Aorta (tissue), 5 donors: ENCODE measurements at regions of chr19 and their contacts with region 1.

Region 1: DNA sequence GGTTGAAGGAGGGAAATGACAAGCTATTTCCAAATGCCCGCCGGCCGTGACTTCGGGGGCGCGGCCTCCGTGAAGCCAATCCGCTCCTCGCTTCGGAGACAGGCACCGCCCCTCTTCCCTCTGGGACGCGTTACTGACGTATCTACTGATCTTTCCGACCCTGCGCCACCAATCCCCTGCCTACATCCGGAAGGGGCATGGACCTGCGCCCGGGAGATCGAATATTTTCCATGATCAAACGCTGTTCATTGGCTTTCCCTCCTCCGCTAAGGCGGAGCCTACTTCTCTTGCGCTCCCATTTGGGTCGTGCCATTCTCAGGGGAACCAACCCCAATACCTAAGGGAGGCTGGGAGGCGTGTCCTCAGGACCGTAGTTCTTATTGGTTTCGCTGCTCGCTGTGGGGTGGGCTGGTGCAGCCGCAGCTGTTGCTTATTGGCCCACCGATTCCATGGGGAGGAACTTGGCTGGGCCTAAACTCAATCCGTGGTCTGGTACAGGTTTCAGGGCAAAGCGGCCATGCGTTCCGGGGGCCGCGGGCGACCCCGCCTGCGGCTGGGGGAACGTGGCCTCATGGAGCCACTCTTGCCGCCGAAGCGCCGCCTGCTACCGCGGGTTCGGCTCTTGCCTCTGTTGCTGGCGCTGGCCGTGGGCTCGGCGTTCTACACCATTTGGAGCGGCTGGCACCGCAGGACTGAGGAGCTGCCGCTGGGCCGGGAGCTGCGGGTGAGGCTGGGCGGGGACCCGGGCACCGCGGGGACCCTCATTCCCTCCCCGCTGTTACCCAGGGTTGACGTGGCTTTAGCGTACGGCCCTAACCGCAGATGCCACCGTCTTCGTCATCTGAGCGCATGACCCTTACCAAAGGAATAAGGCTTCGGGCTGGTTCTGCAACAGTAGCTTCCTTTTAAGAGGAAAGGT is at the start of gene QPCTL:
- DNase-seq: peak; percentile 98 to 99
- ATAC-seq: peak; percentile 96
- H3K4me3 ChIP-seq: peak within 1 kb of the TSS; percentile 37 to 64
- H3K27ac ChIP-seq: peak within 1 kb of the TSS in 1 of 2 donors; percentile 79
- H3K4me1 ChIP-seq: no peaks in the 10 kb centered on the region
- H3K27me3 ChIP-seq: no peaks in the 10 kb centered on the region
- total RNA-seq, gene QPCTL: 5.3 to 5.4 TPM

Region 2: DNA sequence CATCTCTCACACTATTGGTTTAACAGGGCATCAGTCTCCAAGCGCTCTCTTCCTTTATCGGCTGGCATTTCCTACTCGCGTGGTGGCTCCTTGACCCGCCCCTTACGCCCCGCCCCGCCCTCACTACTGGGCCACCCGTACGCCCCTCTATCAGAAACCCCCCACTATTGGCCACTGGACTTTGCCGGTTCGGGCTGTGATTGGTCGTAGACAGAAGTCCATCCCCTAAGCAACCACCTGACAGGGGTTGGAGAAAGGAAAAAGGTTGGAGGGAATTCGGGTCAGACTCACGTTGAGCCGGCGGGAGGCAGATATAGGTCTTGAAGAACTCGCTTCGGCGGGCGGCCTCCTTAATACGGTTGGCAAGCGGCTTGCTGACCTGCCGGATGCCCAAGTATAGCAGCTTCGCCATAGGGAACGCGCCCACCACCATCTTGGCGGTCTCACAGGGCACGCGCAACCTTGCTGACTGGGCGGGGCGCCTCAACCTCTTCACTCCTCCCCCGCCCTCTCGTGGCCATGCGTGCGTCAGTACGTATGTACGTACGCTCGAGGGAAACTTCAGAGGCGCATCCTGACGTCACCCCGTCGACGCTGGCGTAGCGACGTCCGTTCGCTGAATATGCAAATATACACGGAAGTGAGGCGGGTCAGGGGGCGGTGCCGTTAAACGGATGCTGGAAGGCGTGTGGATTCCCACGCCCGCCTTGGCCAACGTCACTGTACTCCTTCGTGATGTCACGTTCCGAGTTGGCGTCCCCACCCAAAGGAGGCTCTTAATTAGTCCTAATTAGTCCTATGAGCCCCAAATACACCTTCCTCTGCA is 107.9 kb before region 1 on chr19 and contains the start of gene OPA3:
- intact Hi-C with region 1: loop called in 1 of 2 experiments (anchors 2 kb)
- DNase-seq: peak; percentile 100
- ATAC-seq: peak; percentile 98
- H3K4me3 ChIP-seq: peak within 1 kb of the TSS; percentile 39 to 50
- H3K27ac ChIP-seq: peak within 1 kb of the TSS in 1 of 2 donors; percentile 90
- H3K4me1 ChIP-seq: no peaks in the 10 kb centered on the region
- H3K27me3 ChIP-seq: no peaks in the 10 kb centered on the region
- total RNA-seq, gene OPA3: 8.6 to 8.8 TPM